PC-3 (cell line): ENCODE measurements at regions of chrX and their contacts with region 1.

Region 1: GRCh38 chrX:21972721-21973120 is 32.2 kb downstream of the SMS start:
- DNase-seq: peak; percentile 10
- ATAC-seq: no peak
- H3K4me3 ChIP-seq: no peak overlapping the region
- H3K27ac ChIP-seq: 0 out of 2 replicates have a peak overlapping the region, but pooled peaks have one; percentile 72
- H3K4me1 ChIP-seq: peaks cover 35% of the 10 kb centered on the region
- H3K27me3 ChIP-seq: no peaks in the 10 kb centered on the region
- CTCF ChIP-seq: peak; percentile 17; the same call in 1 of the 2 replicates

Region 2: DNA sequence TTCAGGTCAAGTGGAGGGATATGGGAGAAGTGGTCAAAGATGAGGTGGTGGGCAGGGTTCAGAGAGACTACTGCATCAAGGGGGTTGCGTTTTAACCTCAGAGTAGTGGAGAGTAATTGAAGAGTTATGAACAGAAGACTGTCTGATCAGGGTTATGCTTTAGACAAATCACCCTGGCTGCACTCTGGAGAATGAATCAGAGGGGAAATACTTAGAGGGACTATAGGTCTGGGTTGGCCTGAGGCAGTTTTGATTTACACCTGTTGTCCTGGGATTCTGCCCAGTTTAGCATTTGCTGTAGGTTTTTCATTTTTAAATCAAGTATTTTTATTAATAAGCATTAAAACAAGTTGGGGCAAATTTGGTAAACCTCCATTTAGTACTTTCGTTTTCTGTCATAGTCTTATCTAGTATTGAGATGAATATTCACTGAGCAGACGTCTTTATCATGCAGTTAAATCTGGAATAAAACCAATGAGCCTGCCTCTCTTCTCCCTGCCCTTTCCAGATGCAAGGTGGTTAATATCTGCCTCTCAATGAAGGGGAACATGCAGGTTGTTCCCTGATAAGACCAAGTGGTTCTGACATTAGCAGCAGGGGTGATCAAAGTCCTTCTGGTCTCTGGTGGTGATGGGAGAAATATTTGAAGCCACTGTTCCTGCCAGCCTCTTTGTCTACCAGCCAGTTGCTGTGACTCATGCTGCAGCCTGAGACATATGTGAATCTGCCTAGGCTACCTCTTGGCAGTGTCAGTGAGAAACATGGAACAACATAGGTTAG is 1590.0 kb before region 1 on chrX:
- CTCF ChIA-PET with region 1: no interaction called
- POLR2A ChIA-PET with region 1: no interaction called
- intact Hi-C with region 1: loop called (anchors 10 kb)
- DNase-seq: peak; percentile 60
- ATAC-seq: peak; percentile 62
- H3K4me3 ChIP-seq: no peak overlapping the region
- H3K27ac ChIP-seq: no peak overlapping the region
- H3K4me1 ChIP-seq: peaks cover 26% of the 10 kb centered on the region
- H3K27me3 ChIP-seq: no peaks in the 10 kb centered on the region
- CTCF ChIP-seq: no peak

Region 3: GRCh38 chrX:21620234-21620633 is 352.5 kb before region 1 on chrX:
- CTCF ChIA-PET with region 1: no interaction called
- POLR2A ChIA-PET with region 1: no interaction called
- intact Hi-C with region 1: loop called (anchors 10 kb)
- DNase-seq: peak; percentile 36
- ATAC-seq: peak; percentile 56
- H3K4me3 ChIP-seq: no peak overlapping the region
- H3K27ac ChIP-seq: no peak overlapping the region
- H3K4me1 ChIP-seq: peaks cover 27% of the 10 kb centered on the region
- H3K27me3 ChIP-seq: no peaks in the 10 kb centered on the region
- CTCF ChIP-seq: no peak

Region 4: GRCh38 chrX:21725496-21725895 is 247.2 kb before region 1 on chrX:
- CTCF ChIA-PET with region 1: interaction called, 5 read pairs
- POLR2A ChIA-PET with region 1: no interaction called
- intact Hi-C with region 1: loop called (anchors 5 kb)
- DNase-seq: peak; percentile 66
- ATAC-seq: peak; percentile 56
- H3K4me3 ChIP-seq: no peak overlapping the region
- H3K27ac ChIP-seq: no peak overlapping the region
- H3K4me1 ChIP-seq: no peaks in the 10 kb centered on the region
- H3K27me3 ChIP-seq: no peaks in the 10 kb centered on the region
- CTCF ChIP-seq: peak; percentile 77

Region 5: DNA sequence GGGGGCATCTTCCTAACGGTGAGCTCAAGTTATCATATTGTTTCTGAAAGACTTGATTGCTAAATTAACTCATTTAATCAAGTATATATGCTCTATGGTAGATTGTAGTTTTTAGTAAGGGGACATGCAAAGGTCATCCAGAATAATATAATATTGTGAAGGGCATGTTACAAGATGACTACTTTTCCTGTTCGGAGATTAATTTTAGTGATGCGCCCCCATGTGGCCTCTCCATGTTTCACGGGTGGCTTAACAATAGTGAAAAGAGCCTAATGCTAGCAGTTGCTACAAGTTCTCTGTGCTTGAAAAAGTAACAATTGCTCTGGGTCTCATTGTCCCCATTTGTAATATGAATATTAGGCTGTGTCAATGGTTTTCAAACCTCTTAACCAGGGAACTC is 227.0 kb before region 1 on chrX:
- CTCF ChIA-PET with region 1: no interaction called
- POLR2A ChIA-PET with region 1: no interaction called
- intact Hi-C with region 1: loop called (anchors 5 kb)
- DNase-seq: peak; percentile 63
- ATAC-seq: no peak
- H3K4me3 ChIP-seq: no peak overlapping the region
- H3K27ac ChIP-seq: no peak overlapping the region
- H3K4me1 ChIP-seq: no peaks in the 10 kb centered on the region
- H3K27me3 ChIP-seq: no peaks in the 10 kb centered on the region
- CTCF ChIP-seq: peak; percentile 75

Region 6: DNA sequence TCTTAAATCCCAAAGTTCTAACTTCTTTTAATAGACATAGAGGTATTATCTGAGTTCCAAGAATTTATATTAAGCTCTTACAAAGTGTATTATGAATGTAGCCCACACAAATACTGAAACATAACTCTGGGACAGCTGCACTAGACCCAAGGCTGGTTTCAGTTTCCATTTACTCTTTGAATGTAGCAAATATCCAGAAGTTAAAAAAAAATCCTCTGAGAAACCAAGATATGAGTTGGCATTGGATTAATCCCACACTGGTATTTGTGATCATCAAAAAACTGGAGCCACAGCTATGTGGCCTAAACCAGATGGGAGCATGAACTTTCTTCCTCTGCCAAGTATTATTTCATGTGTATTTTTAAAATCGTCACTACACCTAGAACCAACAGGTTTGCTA is 191.2 kb before region 1 on chrX:
- CTCF ChIA-PET with region 1: no interaction called
- POLR2A ChIA-PET with region 1: no interaction called
- intact Hi-C with region 1: no loop called
- DNase-seq: no peak
- ATAC-seq: no peak
- H3K4me3 ChIP-seq: no peak overlapping the region
- H3K27ac ChIP-seq: no peak overlapping the region
- H3K4me1 ChIP-seq: no peaks in the 10 kb centered on the region
- H3K27me3 ChIP-seq: no peaks in the 10 kb centered on the region
- CTCF ChIP-seq: no peak

Region 7: GRCh38 chrX:21839334-21840192 is 133.2 kb before region 1 on chrX and contains the start of gene MBTPS2:
- CTCF ChIA-PET with region 1: interaction called, 4 read pairs
- POLR2A ChIA-PET with region 1: no interaction called
- intact Hi-C with region 1: loop called (anchors 1 kb)
- DNase-seq: peak; percentile 85
- ATAC-seq: peak; percentile 82
- H3K4me3 ChIP-seq: peak within 1 kb of the TSS; percentile 82
- H3K27ac ChIP-seq: peak within 1 kb of the TSS; percentile 46; the same call in 1 of the 2 replicates
- H3K4me1 ChIP-seq: peaks cover 12% of the 10 kb centered on the region; the same call in 1 of the 2 replicates
- H3K27me3 ChIP-seq: no peaks in the 10 kb centered on the region
- CTCF ChIP-seq: peak; percentile 24; the same call in 1 of the 2 replicates
- total RNA-seq, gene MBTPS2: 5.8 and 9.7 TPM in 2 replicates

Region 8: DNA sequence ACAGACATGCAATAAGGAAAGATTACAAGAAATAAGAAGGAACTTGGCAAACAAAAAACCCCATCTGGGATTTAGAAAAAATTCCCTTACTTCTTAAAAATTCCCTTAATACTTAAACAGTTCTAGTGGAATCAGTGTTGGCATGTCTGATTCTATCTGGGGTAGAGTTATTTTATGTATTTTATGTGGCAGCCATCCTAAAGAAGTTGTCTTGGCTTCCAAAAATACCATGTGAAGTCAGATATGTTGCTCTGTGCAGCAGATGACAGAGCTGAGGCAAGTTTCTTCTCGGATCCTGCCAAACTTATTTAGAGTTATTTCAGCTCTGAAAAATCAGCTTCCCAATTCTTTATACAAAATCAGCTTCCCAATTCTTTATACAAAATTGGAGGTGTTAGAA is 102.2 kb before region 1 on chrX:
- CTCF ChIA-PET with region 1: no interaction called
- POLR2A ChIA-PET with region 1: no interaction called
- intact Hi-C with region 1: no loop called
- DNase-seq: no peak
- ATAC-seq: no peak
- H3K4me3 ChIP-seq: no peak overlapping the region
- H3K27ac ChIP-seq: no peak overlapping the region
- H3K4me1 ChIP-seq: no peaks in the 10 kb centered on the region
- H3K27me3 ChIP-seq: no peaks in the 10 kb centered on the region
- CTCF ChIP-seq: no peak

Region 9: DNA sequence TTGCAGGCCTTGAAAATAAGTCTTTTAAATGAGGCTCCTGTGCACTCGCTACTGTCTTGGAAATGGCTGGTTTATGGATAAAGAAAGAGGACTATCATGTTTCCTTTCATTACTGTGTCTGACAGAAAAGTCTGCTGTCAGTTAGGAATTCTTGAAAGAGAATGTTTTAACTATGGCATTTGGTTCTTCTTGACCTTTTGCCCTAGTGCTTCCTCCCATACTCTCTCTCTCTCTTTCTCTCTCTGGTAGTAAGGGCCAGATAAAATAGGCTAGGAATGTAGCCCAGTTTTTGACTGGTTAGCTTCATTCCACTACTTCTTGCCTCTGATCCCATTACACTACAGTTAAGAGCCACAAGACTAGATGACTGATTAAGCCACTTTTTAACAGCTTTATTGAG is 87.2 kb before region 1 on chrX:
- CTCF ChIA-PET with region 1: no interaction called
- POLR2A ChIA-PET with region 1: no interaction called
- intact Hi-C with region 1: no loop called
- DNase-seq: no peak
- ATAC-seq: no peak
- H3K4me3 ChIP-seq: no peak overlapping the region
- H3K27ac ChIP-seq: no peak overlapping the region
- H3K4me1 ChIP-seq: no peaks in the 10 kb centered on the region
- H3K27me3 ChIP-seq: no peaks in the 10 kb centered on the region
- CTCF ChIP-seq: no peak

Region 10: GRCh38 chrX:21940356-21940829 is 32.3 kb before region 1 on chrX and contains the start of gene SMS:
- CTCF ChIA-PET with region 1: no interaction called
- POLR2A ChIA-PET with region 1: no interaction called
- intact Hi-C with region 1: loop called (anchors 1 kb)
- DNase-seq: peak; percentile 81
- ATAC-seq: peak; percentile 73
- H3K4me3 ChIP-seq: peak within 1 kb of the TSS; percentile 87
- H3K27ac ChIP-seq: peak within 1 kb of the TSS; percentile 32; the same call in 1 of the 2 replicates
- H3K4me1 ChIP-seq: peaks cover 29% of the 10 kb centered on the region
- H3K27me3 ChIP-seq: no peaks in the 10 kb centered on the region
- CTCF ChIP-seq: no peak
- total RNA-seq, gene SMS: 158 and 164 TPM in 2 replicates

Region 11: GRCh38 chrX:22135994-22136684 is 163.4 kb after region 1 on chrX:
- CTCF ChIA-PET with region 1: no interaction called
- POLR2A ChIA-PET with region 1: no interaction called
- intact Hi-C with region 1: no loop called
- DNase-seq: peak; percentile 83
- ATAC-seq: peak; percentile 70
- H3K4me3 ChIP-seq: peak overlapping the region; percentile 50; the same call in 1 of the 2 replicates
- H3K27ac ChIP-seq: peak overlapping the region; percentile 97
- H3K4me1 ChIP-seq: peaks cover 29% of the 10 kb centered on the region
- H3K27me3 ChIP-seq: no peaks in the 10 kb centered on the region
- CTCF ChIP-seq: peak; percentile 82